GM12878 (cell line): ENCODE measurements at regions of chr18 and their contacts with region 1.

Region 1: GRCh38 chr18:60020601-60020925 is 120.8 kb downstream of the PMAIP1 start:
- DNase-seq: no peak
- ATAC-seq: no peak
- H3K4me3 ChIP-seq: no peak overlapping the region
- H3K27ac ChIP-seq: no peak overlapping the region
- H3K4me1 ChIP-seq: no peaks in the 10 kb centered on the region
- H3K27me3 ChIP-seq: no peaks in the 10 kb centered on the region
- CTCF ChIP-seq: no peak
- EP300 ChIP-seq: no peak
- POLR2A ChIP-seq: no peak
- RAD21 ChIP-seq: no peak

Region 2: GRCh38 chr18:60003610-60004185 is 16.9 kb before region 1 on chr18:
- CTCF ChIA-PET with region 1: no interaction called
- POLR2A ChIA-PET with region 1: no interaction called
- RAD21 ChIA-PET with region 1: no interaction called
- SMC1A ChIA-PET with region 1: no interaction called
- in situ Hi-C with region 1: no loop called
- intact Hi-C with region 1: loop called (anchors 2 kb)
- DNase-seq: no peak
- ATAC-seq: no peak
- H3K4me3 ChIP-seq: no peak overlapping the region
- H3K27ac ChIP-seq: no peak overlapping the region
- H3K4me1 ChIP-seq: no peaks in the 10 kb centered on the region
- H3K27me3 ChIP-seq: no peaks in the 10 kb centered on the region
- CTCF ChIP-seq: no peak
- EP300 ChIP-seq: no peak
- POLR2A ChIP-seq: no peak
- RAD21 ChIP-seq: no peak